ENCODE measurements at regions of chr17 and their contacts with region 1.

Region 1: GRCh38 chr17:385926-386876 is 33.6 kb upstream of the RPH3AL start:
- DNase-seq: peak; percentile 42 to 95
- H3K4me3 ChIP-seq: no peak overlapping the region
- CTCF ChIP-seq: no peak
- POLR2A ChIP-seq: no peak

Region 2: GRCh38 chr17:145671-146541 is 240.3 kb before region 1 on chr17:
- intact Hi-C with region 1: loop called (anchors 5 kb)
- DNase-seq: peak; percentile 11 to 77
- H3K4me3 ChIP-seq: no peak overlapping the region
- CTCF ChIP-seq: no peak
- POLR2A ChIP-seq: no peak

Region 3: DNA sequence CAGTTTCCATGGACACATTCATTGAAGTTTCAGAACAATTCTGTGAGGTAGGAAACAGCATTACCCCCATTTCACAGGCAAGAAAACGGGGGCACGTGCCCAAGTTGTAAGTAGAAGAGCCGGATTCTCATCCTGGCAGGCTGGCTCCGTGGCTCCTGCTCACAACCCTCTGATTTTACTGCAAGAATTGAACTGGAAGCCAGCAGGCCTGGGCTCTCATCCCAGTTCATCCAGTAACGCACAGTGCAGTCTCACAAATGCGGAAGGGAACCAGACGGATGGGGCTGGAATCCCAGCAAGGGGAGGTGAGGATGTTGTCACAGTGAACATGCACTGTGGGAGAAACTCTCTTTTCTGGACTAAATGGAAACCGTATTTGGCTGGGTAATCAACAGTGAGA is 164.0 kb before region 1 on chr17:
- intact Hi-C with region 1: no loop called
- DNase-seq: no peak
- H3K4me3 ChIP-seq: no peak overlapping the region
- CTCF ChIP-seq: no peak
- POLR2A ChIP-seq: no peak

Region 4: DNA sequence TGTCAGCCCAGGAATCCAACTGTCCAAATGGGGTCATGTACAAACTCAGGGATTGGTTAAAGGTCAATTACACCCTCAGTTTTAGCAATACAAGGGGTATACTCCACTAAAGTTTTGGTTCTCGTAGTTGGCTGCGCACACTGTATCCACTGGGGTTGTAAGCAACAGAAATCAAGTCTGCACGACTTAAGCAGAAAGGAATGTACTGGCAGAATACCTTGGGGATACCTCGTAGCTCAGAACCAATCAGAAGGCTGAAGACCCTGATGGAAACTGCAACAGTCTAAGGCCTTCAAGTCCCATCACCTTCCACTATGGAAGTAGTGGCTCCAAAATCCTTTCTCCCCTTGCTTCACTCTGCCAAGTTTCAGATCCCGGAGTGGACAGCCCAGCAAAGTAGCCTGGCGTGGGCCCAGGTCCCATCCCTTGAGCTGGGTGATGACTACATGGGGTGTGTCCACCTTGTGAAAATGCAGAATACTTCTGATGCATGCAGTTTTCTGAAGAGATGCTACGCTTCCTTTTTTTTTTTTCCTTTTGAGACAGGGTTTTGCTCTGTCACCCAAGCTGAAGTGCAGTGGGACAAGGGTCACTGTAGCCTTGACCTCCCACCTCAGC is 12.5 kb before region 1 on chr17:
- intact Hi-C with region 1: no loop called
- DNase-seq: peak in 1 of 2 donors; percentile 85
- H3K4me3 ChIP-seq: no peak overlapping the region
- CTCF ChIP-seq: no peak
- POLR2A ChIP-seq: no peak